ENCODE measurements at regions of chr14 and their contacts with region 1.

Region 1: GRCh38 chr14:100654814-100655740 is 67.9 kb upstream of the BEGAIN start:
- DNase-seq: peak; percentile 76
- ATAC-seq: peak; percentile 71
- H3K4me3 Mint-ChIP-seq: no peak overlapping the region
- H3K27ac Mint-ChIP-seq: no peak overlapping the region
- H3K4me1 Mint-ChIP-seq: peaks cover 19% of the 10 kb centered on the region
- H3K27me3 Mint-ChIP-seq: peaks cover 15% of the 10 kb centered on the region
- CTCF ChIP-seq: peak; percentile 74

Region 2: DNA sequence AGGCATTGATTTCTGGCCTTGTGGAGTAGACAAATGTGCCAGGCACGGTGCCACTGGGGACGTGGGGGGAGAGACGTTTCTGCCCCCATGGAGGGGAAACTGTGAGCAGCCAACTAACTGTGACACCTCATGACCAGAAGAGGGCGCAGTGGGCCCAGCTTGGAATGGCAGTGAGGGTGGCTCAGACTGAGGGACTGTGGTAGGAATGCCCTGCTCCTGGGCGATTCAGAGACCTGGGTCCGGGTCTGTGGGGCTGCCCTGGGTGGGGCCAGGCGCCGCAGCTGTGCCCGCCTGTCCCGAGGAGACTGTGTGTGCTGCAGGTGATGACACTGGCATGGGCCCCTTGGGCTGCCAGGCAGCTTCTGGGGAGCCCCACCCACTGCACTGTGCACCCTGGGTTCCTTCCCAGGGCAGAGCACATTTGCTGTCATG is 271.3 kb before region 1 on chr14:
- CTCF ChIA-PET with region 1: interaction called, 27 read pairs
- POLR2A ChIA-PET with region 1: no interaction called
- DNase-seq: peak; percentile 77
- ATAC-seq: peak; percentile 94
- H3K4me3 Mint-ChIP-seq: no peak overlapping the region
- H3K27ac Mint-ChIP-seq: no peak overlapping the region
- H3K4me1 Mint-ChIP-seq: peaks cover 35% of the 10 kb centered on the region
- H3K27me3 Mint-ChIP-seq: no peaks in the 10 kb centered on the region
- CTCF ChIP-seq: peak; percentile 84

Region 3: GRCh38 chr14:100466111-100466856 is 188.8 kb before region 1 on chr14:
- CTCF ChIA-PET with region 1: interaction called, 10 read pairs
- POLR2A ChIA-PET with region 1: no interaction called
- DNase-seq: peak; percentile 61
- ATAC-seq: peak; percentile 85
- H3K4me3 Mint-ChIP-seq: peak overlapping the region; percentile 44; the same call in 1 of the 2 replicates
- H3K27ac Mint-ChIP-seq: peak overlapping the region; percentile 69
- H3K4me1 Mint-ChIP-seq: peaks cover 32% of the 10 kb centered on the region
- H3K27me3 Mint-ChIP-seq: peaks cover 10% of the 10 kb centered on the region
- CTCF ChIP-seq: no peak

Region 4: DNA sequence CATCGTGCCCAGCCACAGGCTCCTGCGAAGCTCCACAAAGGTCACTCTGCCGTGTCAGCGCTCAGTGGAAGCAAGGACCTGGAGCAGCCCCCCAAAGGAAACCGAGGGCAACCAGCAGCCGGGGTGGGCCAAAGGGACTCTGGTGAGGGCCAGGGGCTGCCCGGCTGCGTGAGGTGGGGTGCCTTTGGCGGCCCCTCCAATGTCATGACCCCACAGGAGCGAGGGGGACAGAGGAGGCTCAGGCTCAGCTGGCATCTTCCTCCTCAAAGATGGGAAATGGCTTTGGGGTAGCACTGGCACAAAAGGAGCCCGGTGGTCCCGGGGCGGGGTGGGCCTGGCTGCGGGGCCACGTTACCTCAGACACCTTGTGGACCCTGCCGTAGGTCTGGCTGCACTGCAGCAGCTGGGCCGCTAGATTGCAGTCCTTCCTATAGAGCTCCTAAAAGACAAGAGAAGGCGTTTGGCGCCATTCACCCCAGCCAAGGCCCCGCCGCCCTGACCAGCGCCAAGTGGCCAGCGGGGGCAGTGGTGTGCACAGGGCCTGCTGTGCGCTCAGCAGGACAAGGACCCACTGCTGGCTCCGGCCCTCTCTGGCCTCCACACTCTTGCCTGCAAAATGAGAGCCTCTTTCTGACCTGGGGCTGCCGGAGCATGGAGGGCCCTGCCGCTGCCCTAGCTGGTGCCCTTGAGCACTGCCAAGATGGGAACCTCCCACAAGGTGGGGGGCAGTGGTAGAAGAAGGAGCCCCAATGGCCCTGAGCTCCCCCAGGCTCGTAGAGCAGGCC is 114.7 kb before region 1 on chr14:
- CTCF ChIA-PET with region 1: interaction called, 11 read pairs
- POLR2A ChIA-PET with region 1: no interaction called
- DNase-seq: peak; percentile 63
- ATAC-seq: peak; percentile 72
- H3K4me3 Mint-ChIP-seq: no peak overlapping the region
- H3K27ac Mint-ChIP-seq: no peak overlapping the region
- H3K4me1 Mint-ChIP-seq: peaks cover 5% of the 10 kb centered on the region
- H3K27me3 Mint-ChIP-seq: no peaks in the 10 kb centered on the region; the same call in 1 of the 2 replicates
- CTCF ChIP-seq: peak; percentile 26; the same call in 1 of the 2 replicates

Region 5: GRCh38 chr14:100709289-100710284 is 54.5 kb after region 1 on chr14:
- CTCF ChIA-PET with region 1: interaction called, 13 read pairs
- POLR2A ChIA-PET with region 1: no interaction called
- DNase-seq: peak; percentile 67
- ATAC-seq: peak; percentile 16
- H3K4me3 Mint-ChIP-seq: peak overlapping the region; percentile 75
- H3K27ac Mint-ChIP-seq: no peak overlapping the region
- H3K4me1 Mint-ChIP-seq: peaks cover 27% of the 10 kb centered on the region
- H3K27me3 Mint-ChIP-seq: peaks cover 21% of the 10 kb centered on the region
- CTCF ChIP-seq: peak; percentile 58